ENCODE measurements at regions of chr2 and their contacts with region 1.

Region 1: DNA sequence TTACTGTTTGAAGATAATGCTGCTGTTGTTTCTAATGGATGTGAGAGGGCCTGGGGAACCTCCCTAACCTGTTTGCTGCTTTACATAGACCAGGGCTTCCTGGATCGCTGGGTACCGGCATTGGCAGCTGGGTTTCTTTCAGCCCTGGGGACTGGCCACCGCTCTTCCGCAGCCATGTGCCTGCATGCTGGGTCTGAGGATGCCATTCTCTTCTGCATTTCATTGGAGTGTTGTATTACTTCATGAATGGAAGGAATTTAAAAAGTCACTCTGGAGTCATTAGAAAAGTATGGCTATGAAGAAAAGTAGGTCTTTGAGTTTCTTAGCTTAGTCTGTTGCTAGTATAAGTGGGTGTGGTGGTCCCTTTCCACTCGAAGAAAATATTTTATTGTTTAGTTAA is 107.3 kb upstream of the MGAT5 start:
- DNase-seq: no peak
- H3K4me3 Mint-ChIP-seq: no peak overlapping the region
- H3K27ac Mint-ChIP-seq: no peak overlapping the region
- H3K4me1 Mint-ChIP-seq: peaks cover 56% of the 10 kb centered on the region
- H3K27me3 Mint-ChIP-seq: no peaks in the 10 kb centered on the region

Region 2: GRCh38 chr2:133484106-133484505 is 662.5 kb before region 1 on chr2:
- CTCF ChIA-PET with region 1: no interaction called
- intact Hi-C with region 1: no loop called
- DNase-seq: no peak
- H3K4me3 Mint-ChIP-seq: no peak overlapping the region
- H3K27ac Mint-ChIP-seq: no peak overlapping the region
- H3K4me1 Mint-ChIP-seq: no peaks in the 10 kb centered on the region
- H3K27me3 Mint-ChIP-seq: no peaks in the 10 kb centered on the region

Region 3: DNA sequence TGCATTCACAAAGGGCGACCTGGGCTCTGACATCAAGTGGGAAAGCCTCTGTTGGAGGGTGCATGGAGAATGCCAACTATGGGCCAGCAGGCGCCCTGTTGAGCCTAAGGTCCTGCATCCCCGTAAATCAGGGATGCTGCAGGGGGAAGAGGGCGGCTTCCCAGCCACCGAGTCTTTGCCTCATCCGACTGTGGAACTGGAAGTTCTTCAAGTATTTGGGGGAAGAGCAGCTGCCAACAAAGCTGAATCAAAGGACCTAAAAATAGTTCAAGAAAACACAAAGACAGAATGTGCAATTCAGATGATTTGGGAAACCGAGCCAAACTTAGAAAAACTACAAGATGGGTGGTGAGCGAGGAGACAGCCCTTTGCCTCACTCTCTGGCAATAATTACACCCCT is 173.8 kb before region 1 on chr2:
- CTCF ChIA-PET with region 1: no interaction called
- intact Hi-C with region 1: no loop called
- DNase-seq: no peak
- H3K4me3 Mint-ChIP-seq: no peak overlapping the region
- H3K27ac Mint-ChIP-seq: no peak overlapping the region
- H3K4me1 Mint-ChIP-seq: no peaks in the 10 kb centered on the region
- H3K27me3 Mint-ChIP-seq: no peaks in the 10 kb centered on the region

Region 4: GRCh38 chr2:134161170-134161547 is 14.5 kb after region 1 on chr2:
- CTCF ChIA-PET with region 1: no interaction called
- intact Hi-C with region 1: loop called (anchors 2 kb)
- DNase-seq: no peak
- H3K4me3 Mint-ChIP-seq: no peak overlapping the region
- H3K27ac Mint-ChIP-seq: no peak overlapping the region
- H3K4me1 Mint-ChIP-seq: peaks cover 52% of the 10 kb centered on the region
- H3K27me3 Mint-ChIP-seq: no peaks in the 10 kb centered on the region

Region 5: DNA sequence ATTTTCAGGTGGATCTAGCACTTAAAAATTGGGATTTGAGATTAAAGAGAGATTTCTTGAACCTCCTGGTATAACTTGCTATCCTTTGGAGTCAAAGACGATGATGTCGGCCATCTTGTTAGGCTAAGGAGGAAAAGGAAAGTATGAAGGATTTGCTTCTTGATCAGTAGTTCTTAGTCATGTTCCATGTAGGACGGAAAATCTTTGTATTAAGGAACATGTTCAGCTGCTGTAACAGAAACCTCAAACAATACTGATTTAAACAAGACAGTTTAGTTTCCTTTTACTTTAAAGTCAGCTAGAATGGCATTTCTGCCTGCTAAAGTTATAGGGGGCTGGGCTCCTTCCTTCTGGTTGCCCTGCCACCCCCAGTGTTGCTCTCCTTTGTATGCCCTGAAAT is 50.8 kb after region 1 on chr2:
- CTCF ChIA-PET with region 1: no interaction called
- intact Hi-C with region 1: no loop called
- DNase-seq: no peak
- H3K4me3 Mint-ChIP-seq: peak overlapping the region; percentile 15
- H3K27ac Mint-ChIP-seq: peak overlapping the region; percentile 77
- H3K4me1 Mint-ChIP-seq: peaks cover 62% of the 10 kb centered on the region
- H3K27me3 Mint-ChIP-seq: no peaks in the 10 kb centered on the region

Measured in activated naive CD4-positive, alpha-beta T cell treated with anti-CD3 and anti-CD28 coated beads for 36 hours (primary cell).